Dendritic cell treated with granulocyte-macrophage colony-stimulating factor and Interleukin-4, amounts not matched to agents 40 ng/mL and 50 ng/mL, for 4 days (primary cell): ENCODE measurements at regions of chr17 and their contacts with region 1.

Region 1: GRCh38 chr17:42276359-42276608 is at the start of gene STAT5B:
- H3K4me3 Mint-ChIP-seq: peak within 1 kb of the TSS; percentile 89
- H3K27ac Mint-ChIP-seq: peak within 1 kb of the TSS; percentile 83
- H3K4me1 Mint-ChIP-seq: peaks cover 51% of the 10 kb centered on the region
- H3K27me3 Mint-ChIP-seq: peaks cover 5% of the 10 kb centered on the region

Region 2: GRCh38 chr17:42200702-42201101 is 75.6 kb before region 1 on chr17:
- intact Hi-C with region 1: no loop called
- H3K4me3 Mint-ChIP-seq: no peak overlapping the region
- H3K27ac Mint-ChIP-seq: peak overlapping the region; percentile 93
- H3K4me1 Mint-ChIP-seq: peaks cover 20% of the 10 kb centered on the region
- H3K27me3 Mint-ChIP-seq: no peaks in the 10 kb centered on the region

Region 3: DNA sequence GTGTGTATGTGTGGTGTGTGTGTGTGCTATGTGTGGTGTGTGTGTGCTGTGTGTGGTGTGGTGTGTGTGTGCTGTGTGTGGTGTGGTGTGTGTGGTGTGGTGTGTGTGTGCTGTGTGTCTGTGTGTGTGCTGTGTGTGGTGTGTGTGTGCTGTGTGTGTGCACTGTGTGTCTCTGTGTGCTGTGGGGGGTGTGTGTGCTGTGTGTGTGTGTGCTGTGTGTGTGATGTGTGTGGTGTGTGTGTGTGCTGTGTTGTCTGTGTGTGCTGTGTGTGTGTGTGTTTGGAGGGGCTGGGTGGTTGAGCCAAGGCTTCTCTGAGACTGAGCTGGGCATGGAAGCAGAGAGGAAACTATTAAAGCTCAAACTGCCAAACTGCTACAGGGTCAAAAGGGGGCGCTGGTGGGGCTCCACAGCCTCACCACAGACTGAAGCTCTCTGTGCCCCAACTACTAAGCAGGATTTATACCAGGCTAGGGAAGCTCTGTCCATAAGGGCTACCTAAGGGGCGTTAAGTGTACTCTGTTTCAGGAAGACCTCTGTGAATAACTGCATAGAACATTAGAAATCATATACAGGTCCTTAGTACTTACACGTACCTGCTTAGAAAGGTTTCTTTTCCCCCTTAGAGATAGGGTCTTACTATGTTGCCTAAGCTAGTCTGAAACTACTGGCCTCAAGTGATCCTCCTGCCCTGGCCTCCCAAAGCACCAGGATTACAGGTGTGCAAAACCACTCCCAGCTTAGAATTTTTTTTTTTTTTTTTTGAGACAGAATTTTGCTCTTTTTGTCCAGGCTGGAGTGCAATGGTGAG is 54.1 kb before region 1 on chr17:
- intact Hi-C with region 1: loop called (anchors 10 kb)
- H3K4me3 Mint-ChIP-seq: no peak overlapping the region
- H3K27ac Mint-ChIP-seq: peak overlapping the region; percentile 43
- H3K4me1 Mint-ChIP-seq: no peaks in the 10 kb centered on the region
- H3K27me3 Mint-ChIP-seq: no peaks in the 10 kb centered on the region

Region 4: DNA sequence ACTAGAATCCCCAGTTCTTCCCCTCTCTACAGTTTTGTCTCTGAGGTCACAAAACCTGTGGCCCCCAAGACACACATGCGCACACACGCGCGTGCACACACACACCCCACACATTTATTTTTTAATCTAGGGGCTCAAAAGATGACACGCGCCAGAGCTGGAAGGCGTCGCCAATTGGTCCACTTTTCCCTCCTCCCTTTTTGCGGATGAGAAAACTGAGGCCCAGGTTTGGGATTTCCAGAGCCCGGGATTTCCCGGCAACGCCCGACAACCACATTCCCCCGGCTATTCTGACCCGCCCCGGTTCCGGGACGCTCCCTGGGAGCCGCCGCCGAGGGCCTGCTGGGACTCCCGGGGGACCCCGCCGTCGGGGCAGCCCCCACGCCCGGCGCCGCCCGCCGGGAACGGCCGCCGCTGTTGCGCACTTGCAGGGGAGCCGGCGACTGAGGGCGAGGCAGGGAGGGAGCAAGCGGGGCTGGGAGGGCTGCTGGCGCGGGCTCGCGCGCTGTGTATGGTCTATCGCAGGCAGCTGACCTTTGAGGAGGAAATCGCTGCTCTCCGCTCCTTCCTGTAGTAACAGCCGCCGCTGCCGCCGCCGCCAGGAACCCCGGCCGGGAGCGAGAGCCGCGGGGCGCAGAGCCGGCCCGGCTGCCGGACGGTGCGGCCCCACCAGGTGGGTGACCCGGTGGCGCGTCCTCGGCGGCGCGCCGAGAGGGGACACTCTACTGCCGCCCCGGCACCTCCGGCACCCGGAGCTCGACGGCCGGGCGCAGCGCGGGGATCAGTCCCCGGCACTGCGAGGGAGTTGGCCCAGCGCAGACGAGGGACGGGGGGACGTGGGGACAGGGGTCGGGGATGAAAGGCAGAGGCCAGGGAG is 11.9 kb after region 1 on chr17 and contains the start of gene STAT5A:
- intact Hi-C with region 1: loop called (anchors 2 kb)
- H3K4me3 Mint-ChIP-seq: peak within 1 kb of the TSS; percentile 91
- H3K27ac Mint-ChIP-seq: peak within 1 kb of the TSS; percentile 93
- H3K4me1 Mint-ChIP-seq: peaks cover 71% of the 10 kb centered on the region
- H3K27me3 Mint-ChIP-seq: no peaks in the 10 kb centered on the region